ENCODE measurements at regions of chr18 and their contacts with region 1.

Region 1: DNA sequence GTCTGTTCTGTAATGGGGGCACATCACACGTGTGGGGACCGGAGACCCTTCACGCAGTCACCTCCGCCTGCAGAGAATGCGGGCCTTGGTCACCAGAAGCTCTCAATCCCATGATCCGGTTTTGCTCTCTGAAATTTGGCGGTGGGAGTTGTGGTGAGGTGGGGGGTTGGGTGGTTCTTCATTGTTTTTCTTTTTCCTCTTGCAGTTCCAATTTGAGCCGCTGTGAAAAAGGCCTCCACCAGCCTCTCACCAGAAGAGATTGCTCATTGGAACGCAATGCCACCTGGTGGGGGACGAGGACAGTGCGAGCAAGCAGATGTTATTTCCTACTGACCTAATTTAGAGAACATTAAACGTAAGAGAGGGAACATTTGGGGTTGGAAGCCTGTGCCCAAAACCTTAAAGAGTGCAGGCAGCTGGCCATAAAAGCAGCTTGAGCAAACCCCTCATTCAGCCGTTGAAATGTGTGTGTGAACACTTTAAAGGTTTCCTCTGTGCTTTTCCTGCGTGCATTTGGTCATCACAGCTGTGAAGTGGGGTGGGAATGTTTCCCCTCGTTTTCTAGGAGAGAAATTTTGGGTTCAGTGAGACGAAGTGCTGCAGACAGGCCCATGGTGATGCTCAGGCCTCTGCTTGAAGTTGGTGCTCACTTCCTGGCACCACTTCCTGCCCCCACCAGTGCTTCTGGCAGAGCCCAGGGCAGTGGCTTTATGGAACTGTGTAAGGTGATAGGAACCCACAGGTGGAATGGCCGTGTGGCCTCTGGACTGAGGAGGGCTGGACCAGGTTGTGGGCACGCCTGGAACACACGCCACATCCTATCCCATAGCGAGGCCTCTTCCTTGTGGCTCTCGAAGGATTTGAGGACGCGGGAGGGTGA is 61.7 kb downstream of the ZCCHC2 start:
- DNase-seq: peak; percentile 76
- ATAC-seq: peak; percentile 91
- H3K4me3 ChIP-seq: no peak overlapping the region
- H3K27ac ChIP-seq: no peak overlapping the region
- H3K4me1 ChIP-seq: peaks cover 4% of the 10 kb centered on the region
- H3K27me3 ChIP-seq: no peaks in the 10 kb centered on the region
- CTCF ChIP-seq: peak; percentile 82

Region 2: DNA sequence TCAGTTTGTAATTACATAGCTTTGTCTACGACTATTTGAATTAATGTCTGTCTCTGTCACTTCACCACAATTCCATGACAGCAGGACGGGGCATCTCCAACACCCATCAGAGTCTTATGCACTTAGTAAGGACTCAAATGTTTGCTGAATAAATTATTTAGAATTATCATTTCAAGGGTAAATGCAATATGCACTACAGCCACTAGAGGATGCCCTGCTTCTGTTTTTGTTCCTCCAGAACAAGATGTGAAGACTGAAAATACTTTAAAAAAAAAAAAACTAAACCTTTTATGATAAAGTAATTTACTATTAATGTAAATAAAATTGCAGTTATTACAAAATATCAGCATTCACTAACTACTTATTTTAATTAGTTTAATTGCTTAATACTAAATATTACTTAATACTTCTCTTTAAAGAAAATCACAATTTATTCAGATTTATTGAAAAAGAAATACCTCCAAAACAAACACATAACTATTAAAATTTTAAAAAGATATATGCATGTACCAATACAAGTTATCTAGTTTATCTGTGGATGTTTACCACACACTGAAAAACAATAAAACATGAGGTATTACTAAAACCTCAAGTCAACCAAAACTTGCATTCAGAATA is 400.8 kb before region 1 on chr18:
- CTCF ChIA-PET with region 1: no interaction called
- POLR2A ChIA-PET with region 1: no interaction called
- in situ Hi-C with region 1: no loop called
- intact Hi-C with region 1: loop called (anchors 5 kb)
- DNase-seq: peak; percentile 57
- ATAC-seq: no peak
- H3K4me3 ChIP-seq: no peak overlapping the region
- H3K27ac ChIP-seq: no peak overlapping the region
- H3K4me1 ChIP-seq: peaks cover 9% of the 10 kb centered on the region; the same call in 1 of the 2 replicates
- H3K27me3 ChIP-seq: no peaks in the 10 kb centered on the region
- CTCF ChIP-seq: peak; percentile 81; the same call in 1 of the 2 replicates

Region 3: DNA sequence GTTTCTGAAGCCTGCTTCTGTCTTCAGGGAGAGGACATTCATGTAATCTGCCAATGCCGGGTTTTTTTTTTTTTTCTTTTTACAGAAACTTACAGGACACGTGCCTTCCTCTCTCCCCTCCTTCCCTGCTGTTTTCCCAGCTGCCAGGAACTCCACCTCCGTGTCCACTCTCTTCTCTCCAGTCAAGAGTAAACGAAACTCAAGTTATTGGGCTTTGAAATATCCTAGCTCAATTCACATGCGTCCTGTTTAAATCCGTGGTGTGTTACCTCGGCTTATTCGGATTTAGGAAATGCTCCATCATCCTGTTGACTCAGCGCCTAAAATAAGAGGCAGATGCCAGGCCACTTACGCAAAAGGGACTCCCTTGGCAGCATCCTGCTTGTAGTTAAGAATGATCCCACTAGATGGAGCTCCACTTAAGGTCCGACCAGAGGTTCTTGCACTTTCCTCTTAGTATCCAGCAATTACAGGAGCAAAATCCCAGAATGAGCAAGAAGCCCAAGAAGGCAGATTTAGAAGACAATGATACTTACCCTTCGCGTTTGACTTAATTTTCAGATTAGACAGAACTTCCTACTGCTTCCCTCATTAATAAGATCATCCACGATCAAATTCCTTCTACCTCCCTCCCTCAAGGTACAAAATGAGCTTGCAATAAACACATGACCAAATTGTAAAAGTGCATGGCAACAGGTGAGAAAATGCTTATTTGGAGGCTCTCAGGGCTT is 158.9 kb before region 1 on chr18:
- CTCF ChIA-PET with region 1: no interaction called
- POLR2A ChIA-PET with region 1: no interaction called
- in situ Hi-C with region 1: no loop called
- intact Hi-C with region 1: loop called (anchors 2 kb)
- DNase-seq: peak; percentile 94
- ATAC-seq: peak; percentile 92
- H3K4me3 ChIP-seq: peak overlapping the region; percentile 24 to 60
- H3K27ac ChIP-seq: peak overlapping the region; percentile 70
- H3K4me1 ChIP-seq: peaks cover 12% of the 10 kb centered on the region
- H3K27me3 ChIP-seq: no peaks in the 10 kb centered on the region
- CTCF ChIP-seq: peak; percentile 75

Region 4: DNA sequence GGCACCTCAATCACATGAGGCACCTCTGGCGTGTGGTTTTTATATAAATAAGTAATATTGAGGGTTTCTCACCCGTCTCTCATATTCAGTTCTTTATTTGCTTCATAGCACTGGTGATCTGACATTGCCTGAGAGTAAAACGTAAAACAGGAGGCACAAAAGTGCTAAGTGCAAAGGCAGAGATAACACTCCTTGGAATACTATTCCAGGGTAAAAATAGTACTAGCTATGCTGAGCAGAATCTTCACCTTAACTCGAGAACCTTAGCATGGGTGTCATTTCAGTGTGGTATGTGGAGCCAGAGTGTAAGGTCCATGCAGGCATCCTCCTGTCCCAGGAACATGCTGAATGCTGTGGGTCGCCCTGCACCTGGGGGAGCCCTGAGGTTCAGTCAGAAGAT is 34.7 kb before region 1 on chr18:
- CTCF ChIA-PET with region 1: no interaction called
- POLR2A ChIA-PET with region 1: no interaction called
- in situ Hi-C with region 1: no loop called
- intact Hi-C with region 1: no loop called
- DNase-seq: no peak
- ATAC-seq: no peak
- H3K4me3 ChIP-seq: no peak overlapping the region
- H3K27ac ChIP-seq: no peak overlapping the region
- H3K4me1 ChIP-seq: peaks cover 4% of the 10 kb centered on the region; the same call in 1 of the 2 replicates
- H3K27me3 ChIP-seq: no peaks in the 10 kb centered on the region
- CTCF ChIP-seq: no peak

Measured in Panc1 (cell line).